A673 (cell line): ENCODE measurements at regions of chr1 and their contacts with region 1.

Region 1: DNA sequence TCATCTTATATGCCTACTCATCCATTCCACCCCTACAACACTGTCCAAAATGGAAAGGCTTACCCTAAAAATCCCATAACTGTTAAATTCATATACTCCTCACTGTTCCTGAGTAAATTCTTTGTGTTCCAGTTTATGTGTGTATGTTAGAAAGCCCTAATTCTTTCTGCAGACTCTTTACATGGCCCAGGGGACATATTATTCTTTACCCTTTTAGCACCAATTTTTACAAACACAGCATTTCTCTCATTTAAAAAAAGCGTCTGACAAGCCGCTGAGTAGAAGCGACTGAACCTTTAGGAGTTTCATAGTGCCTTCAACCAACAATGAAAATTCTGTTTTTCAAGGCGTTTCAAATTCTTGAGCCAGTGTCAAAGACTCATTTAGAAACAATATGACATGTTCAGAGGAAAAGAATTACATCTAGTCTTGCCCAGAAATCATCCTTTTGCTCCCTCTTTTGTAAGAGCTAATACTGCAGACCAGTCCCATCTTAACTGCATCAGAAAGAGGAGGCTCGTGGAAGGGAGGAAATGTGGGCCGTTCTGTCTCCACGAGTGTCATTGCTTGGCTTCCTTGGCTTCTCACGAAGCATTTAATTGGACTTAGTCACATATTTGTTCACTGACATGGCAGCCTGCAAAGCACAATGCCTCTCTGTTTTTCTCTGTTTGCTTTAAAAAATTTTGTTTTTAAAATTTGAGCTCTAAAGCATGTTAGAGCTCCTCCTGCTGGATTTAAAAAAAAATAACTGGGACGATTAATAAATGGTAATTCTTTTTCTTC is 21.3 kb upstream of the C1orf105 start:
- DNase-seq: peak; percentile 88
- H3K4me3 ChIP-seq: no peak overlapping the region
- H3K27ac ChIP-seq: peak overlapping the region; percentile 39
- H3K4me1 ChIP-seq: peaks cover 21% of the 10 kb centered on the region
- H3K27me3 ChIP-seq: no peaks in the 10 kb centered on the region
- CTCF ChIP-seq: peak; percentile 75

Region 2: DNA sequence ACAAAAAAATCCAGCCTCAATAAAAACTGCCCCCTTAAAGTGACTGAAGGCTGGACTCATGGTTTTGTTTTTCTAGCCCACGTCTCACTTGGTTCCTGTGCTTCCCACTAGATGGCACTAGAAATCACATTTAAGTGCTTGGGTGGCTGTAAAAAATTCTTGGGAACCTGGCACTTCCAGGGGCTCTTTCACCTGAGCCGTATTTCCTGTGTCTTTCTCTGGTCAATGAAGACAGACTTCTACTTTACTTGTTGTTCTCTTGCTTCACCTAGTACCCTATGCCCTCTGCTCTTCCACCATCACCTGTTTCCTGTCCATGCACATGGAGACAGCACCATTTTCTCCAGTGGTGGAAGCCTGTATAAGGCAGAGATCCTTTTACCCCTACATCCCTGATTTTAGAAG is 597.7 kb before region 1 on chr1:
- CTCF ChIA-PET with region 1: no interaction called
- POLR2A ChIA-PET with region 1: no interaction called
- intact Hi-C with region 1: loop called (anchors 10 kb)
- DNase-seq: peak; percentile 53
- H3K4me3 ChIP-seq: no peak overlapping the region
- H3K27ac ChIP-seq: no peak overlapping the region
- H3K4me1 ChIP-seq: no peaks in the 10 kb centered on the region
- H3K27me3 ChIP-seq: no peaks in the 10 kb centered on the region
- CTCF ChIP-seq: peak; percentile 81

Region 3: DNA sequence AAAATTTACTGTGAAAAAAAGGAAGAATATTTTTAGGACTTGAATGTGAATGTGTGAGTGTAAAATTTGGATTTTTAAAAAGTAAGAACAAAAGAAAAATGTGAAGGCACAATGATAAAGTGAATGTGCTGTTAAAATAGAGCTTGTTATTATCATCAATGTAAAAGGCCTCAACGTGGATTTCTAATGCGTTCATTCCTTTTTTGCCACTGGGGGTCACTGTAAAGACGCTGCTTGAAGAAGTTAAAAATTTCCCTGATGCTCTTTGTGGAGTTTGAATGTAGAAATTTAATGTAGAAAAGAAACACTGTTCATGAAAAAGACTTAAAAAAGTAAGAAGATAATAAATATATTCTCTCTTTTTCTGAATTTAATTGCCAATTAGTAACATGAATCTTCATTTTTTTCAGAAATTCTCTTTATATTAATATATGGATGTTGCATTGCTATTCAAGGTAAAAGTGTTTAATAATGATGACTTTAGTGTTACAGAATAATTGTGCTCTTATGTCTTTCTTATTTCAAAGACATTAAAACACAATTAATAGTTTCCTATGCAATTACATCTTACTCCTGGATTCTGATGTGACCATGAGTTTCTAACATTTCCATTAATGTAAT is 396.3 kb before region 1 on chr1:
- CTCF ChIA-PET with region 1: interaction called, 20 read pairs
- POLR2A ChIA-PET with region 1: no interaction called
- intact Hi-C with region 1: loop called (anchors 2 kb)
- DNase-seq: peak; percentile 83
- H3K4me3 ChIP-seq: no peak overlapping the region
- H3K27ac ChIP-seq: no peak overlapping the region
- H3K4me1 ChIP-seq: no peaks in the 10 kb centered on the region
- H3K27me3 ChIP-seq: no peaks in the 10 kb centered on the region
- CTCF ChIP-seq: peak; percentile 86

Region 4: DNA sequence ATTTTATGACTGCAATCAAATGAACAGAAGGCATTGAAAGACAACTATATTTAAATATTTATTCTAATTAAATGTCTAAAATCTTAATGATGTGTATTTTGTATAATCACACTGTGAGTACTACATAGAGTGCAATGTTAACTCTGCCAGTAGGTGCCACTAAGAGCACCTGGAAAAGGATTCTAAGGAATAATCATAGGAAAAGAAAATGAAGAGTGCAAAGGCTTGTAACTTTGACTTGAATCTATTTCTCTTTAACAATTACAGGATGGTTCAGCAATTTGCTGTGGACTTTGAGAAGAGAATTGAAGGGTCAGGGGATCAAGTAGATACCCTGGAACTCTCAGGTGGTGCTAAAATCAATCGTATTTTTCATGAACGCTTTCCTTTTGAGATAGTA is 357.4 kb before region 1 on chr1:
- CTCF ChIA-PET with region 1: interaction called, 5 read pairs
- POLR2A ChIA-PET with region 1: no interaction called
- intact Hi-C with region 1: loop called (anchors 2 kb)
- DNase-seq: peak; percentile 40
- H3K4me3 ChIP-seq: no peak overlapping the region
- H3K27ac ChIP-seq: no peak overlapping the region
- H3K4me1 ChIP-seq: peaks cover 24% of the 10 kb centered on the region
- H3K27me3 ChIP-seq: no peaks in the 10 kb centered on the region
- CTCF ChIP-seq: peak; percentile 60

Region 5: DNA sequence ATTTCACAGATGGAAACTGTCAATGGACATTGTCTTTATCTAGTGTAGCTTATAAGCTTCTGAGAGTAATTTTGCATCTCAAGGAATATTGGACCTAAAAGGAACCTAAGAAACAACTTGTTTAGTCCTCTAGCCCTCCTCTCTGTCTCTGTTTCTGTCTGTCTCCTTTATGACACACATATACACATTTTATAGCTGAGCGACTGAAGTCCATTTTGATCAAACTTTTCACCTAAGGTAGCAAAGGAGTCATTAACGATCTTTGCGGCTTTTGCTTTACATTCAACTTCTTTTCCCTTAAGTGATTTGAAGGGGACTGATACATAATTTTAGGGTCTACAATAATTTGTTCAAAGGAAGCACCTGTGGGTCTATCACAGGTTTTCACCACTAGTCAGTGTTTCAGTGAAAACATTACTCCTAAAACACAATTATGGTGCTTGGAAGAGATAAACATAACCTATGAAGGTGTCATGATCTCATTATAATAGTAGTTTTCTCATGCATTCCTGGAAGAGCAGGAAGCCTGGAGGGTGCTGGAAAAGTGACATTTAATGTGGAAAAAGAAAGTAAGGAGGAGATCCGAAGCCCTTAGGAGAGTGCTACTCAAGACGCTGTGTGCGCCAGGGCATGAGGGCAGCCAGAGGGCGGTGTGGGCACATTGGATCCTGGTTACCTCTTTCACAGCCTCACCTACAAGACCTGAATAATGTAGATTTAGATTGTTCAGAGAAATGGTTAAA is 309.2 kb before region 1 on chr1:
- CTCF ChIA-PET with region 1: no interaction called
- POLR2A ChIA-PET with region 1: no interaction called
- intact Hi-C with region 1: loop called (anchors 2 kb)
- DNase-seq: peak; percentile 65
- H3K4me3 ChIP-seq: no peak overlapping the region
- H3K27ac ChIP-seq: no peak overlapping the region
- H3K4me1 ChIP-seq: peaks cover 7% of the 10 kb centered on the region
- H3K27me3 ChIP-seq: no peaks in the 10 kb centered on the region
- CTCF ChIP-seq: peak; percentile 87

Region 6: DNA sequence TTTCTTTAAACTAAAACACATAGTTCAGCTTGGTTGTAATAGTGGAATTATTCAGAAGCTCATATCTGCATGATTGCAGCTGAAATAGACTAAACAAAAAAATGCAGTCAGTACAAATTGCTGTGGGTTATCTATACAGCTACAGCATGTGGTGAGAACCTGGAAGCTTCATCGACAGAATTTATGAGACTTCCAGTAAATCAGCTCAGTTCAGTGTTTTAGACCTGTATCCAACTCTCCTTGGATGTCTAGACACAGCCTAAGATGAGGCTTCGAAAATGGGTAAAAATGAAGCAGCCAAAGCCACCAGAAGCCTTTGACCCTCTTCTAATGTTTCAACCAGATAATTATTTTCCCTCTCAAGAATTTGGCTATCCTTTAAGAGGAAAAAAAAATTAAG is 105.7 kb before region 1 on chr1:
- CTCF ChIA-PET with region 1: no interaction called
- POLR2A ChIA-PET with region 1: no interaction called
- intact Hi-C with region 1: no loop called
- DNase-seq: no peak
- H3K4me3 ChIP-seq: no peak overlapping the region
- H3K27ac ChIP-seq: no peak overlapping the region
- H3K4me1 ChIP-seq: no peaks in the 10 kb centered on the region
- H3K27me3 ChIP-seq: no peaks in the 10 kb centered on the region
- CTCF ChIP-seq: no peak

Region 7: GRCh38 chr1:172357753-172358385 is 41.3 kb before region 1 on chr1:
- CTCF ChIA-PET with region 1: interaction called, 3 read pairs
- POLR2A ChIA-PET with region 1: no interaction called
- intact Hi-C with region 1: loop called (anchors 5 kb)
- DNase-seq: peak; percentile 86
- H3K4me3 ChIP-seq: peak overlapping the region; percentile 33
- H3K27ac ChIP-seq: peak overlapping the region; percentile 87
- H3K4me1 ChIP-seq: peaks cover 63% of the 10 kb centered on the region
- H3K27me3 ChIP-seq: no peaks in the 10 kb centered on the region
- CTCF ChIP-seq: no peak

Region 8: GRCh38 chr1:172662464-172663109 is 263.4 kb after region 1 on chr1:
- CTCF ChIA-PET with region 1: no interaction called
- POLR2A ChIA-PET with region 1: no interaction called
- intact Hi-C with region 1: no loop called
- DNase-seq: peak; percentile 77
- H3K4me3 ChIP-seq: no peak overlapping the region
- H3K27ac ChIP-seq: no peak overlapping the region
- H3K4me1 ChIP-seq: no peaks in the 10 kb centered on the region
- H3K27me3 ChIP-seq: no peaks in the 10 kb centered on the region
- CTCF ChIP-seq: no peak